ENCODE measurements at regions of chr17 and their contacts with region 1.

Region 1: DNA sequence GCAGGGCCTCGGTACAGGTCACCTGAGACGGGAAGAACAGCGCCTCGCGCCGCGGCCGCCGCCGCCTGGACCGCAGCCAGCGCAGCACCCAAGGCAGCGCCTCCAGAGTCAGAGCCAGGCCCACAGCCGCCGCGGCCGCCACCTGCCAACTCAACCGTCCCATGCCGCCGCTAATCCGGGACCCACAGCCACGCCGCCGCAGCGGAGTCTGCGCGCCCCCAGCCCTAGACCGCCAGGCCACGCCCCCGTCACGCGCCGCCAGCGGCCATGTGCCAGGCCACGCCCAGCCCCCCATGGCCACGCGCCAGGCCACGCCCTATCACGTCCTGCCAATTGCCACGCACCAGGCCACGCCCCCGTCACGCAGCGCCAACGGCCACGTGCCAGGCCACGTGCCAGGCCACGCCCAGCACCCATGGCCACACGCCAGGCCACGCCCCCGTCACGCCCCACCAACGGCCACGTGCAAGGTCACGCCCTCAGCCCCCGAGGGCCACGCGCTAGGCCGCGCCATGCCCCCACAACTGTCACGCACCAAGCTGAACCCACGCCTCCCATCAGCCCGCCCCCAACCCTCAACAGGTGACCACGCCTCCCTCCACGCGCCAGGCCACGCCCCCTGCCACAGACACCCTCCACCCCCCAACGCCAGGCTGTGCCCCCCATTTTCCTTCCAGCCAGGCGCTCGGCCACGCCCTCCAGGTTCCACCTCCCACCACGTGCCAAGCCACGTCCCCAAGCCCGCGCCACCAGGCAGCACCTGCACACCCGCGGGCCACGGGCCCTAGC is at the start of gene PLD6:
- DNase-seq: peak; percentile 93
- H3K4me3 Mint-ChIP-seq: peak within 1 kb of the TSS; percentile 90
- H3K27ac Mint-ChIP-seq: peak within 1 kb of the TSS; percentile 91
- H3K4me1 Mint-ChIP-seq: peaks cover 22% of the 10 kb centered on the region
- H3K27me3 Mint-ChIP-seq: no peaks in the 10 kb centered on the region
- total RNA-seq, gene PLD6: 9.3 to 9.4 TPM

Region 2: DNA sequence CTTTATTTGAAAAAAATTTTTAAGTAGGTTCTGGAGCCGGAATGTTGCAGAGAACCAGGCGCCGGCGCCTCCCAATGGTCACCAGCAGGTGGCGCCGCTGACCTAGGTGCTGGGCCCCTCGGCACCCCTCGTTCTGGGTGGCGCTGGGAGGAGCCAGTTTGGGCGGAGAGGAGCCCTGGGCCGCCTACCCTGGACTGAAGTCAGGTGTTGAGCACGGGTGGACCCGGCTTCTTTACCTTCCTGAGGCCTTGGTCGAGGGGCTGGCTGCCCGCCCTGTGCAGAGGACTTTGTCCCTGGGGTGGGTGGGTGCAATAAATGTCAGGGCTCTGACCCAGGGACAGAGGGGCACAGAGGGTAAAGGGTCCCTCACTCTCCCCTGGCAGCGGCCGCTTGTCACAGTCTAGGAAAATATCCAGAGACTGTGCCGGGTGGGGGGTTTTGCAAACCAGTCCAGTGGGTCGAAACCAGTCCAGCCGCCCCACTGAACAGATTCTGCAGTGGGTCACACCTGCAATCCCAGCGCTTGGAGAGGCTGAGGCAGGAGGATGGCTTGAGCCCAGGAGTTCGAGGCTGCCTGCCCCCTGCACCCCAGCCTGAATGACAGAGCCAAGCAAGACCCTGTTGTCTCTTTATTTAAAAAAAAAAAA is 204.3 kb before region 1 on chr17:
- CTCF ChIA-PET with region 1: no interaction called
- POLR2A ChIA-PET with region 1: no interaction called
- intact Hi-C with region 1: loop called (anchors 5 kb)
- DNase-seq: peak; percentile 81
- H3K4me3 Mint-ChIP-seq: no peak overlapping the region
- H3K27ac Mint-ChIP-seq: no peak overlapping the region
- H3K4me1 Mint-ChIP-seq: no peaks in the 10 kb centered on the region
- H3K27me3 Mint-ChIP-seq: no peaks in the 10 kb centered on the region

Region 3: GRCh38 chr17:17041571-17042380 is 164.5 kb before region 1 on chr17:
- CTCF ChIA-PET with region 1: no interaction called
- POLR2A ChIA-PET with region 1: no interaction called
- intact Hi-C with region 1: loop called (anchors 5 kb)
- DNase-seq: peak; percentile 98
- H3K4me3 Mint-ChIP-seq: peak overlapping the region; percentile 70
- H3K27ac Mint-ChIP-seq: peak overlapping the region; percentile 9
- H3K4me1 Mint-ChIP-seq: peaks cover 38% of the 10 kb centered on the region
- H3K27me3 Mint-ChIP-seq: no peaks in the 10 kb centered on the region

Region 4: GRCh38 chr17:17179371-17179827 is 26.9 kb before region 1 on chr17:
- CTCF ChIA-PET with region 1: interaction called, 3 read pairs
- POLR2A ChIA-PET with region 1: interaction called, 4 read pairs
- intact Hi-C with region 1: loop called (anchors 1 kb)
- DNase-seq: peak; percentile 37
- H3K4me3 Mint-ChIP-seq: peak overlapping the region; percentile 63
- H3K27ac Mint-ChIP-seq: peak overlapping the region; percentile 95
- H3K4me1 Mint-ChIP-seq: peaks cover 83% of the 10 kb centered on the region
- H3K27me3 Mint-ChIP-seq: no peaks in the 10 kb centered on the region

Region 5: GRCh38 chr17:17237026-17237799 is 30.9 kb after region 1 on chr17 and contains the start of gene FLCN:
- CTCF ChIA-PET with region 1: no interaction called
- POLR2A ChIA-PET with region 1: no interaction called
- intact Hi-C with region 1: loop called (anchors 2 kb)
- DNase-seq: peak; percentile 92
- H3K4me3 Mint-ChIP-seq: peak within 1 kb of the TSS; percentile 97
- H3K27ac Mint-ChIP-seq: peak within 1 kb of the TSS; percentile 94
- H3K4me1 Mint-ChIP-seq: peaks cover 36% of the 10 kb centered on the region
- H3K27me3 Mint-ChIP-seq: no peaks in the 10 kb centered on the region
- total RNA-seq, gene FLCN: 24.0 to 24.6 TPM

Measured in activated CD4-positive, alpha-beta memory T cell treated with anti-CD3 and anti-CD28 coated beads for 36 hours (primary cell).